Endothelial cell of umbilical vein (primary cell): ENCODE measurements at regions of chr5 and their contacts with region 1.

Region 1: GRCh38 chr5:124649491-124650146 is 96.8 kb downstream of the ZNF608 start:
- DNase-seq: peak; percentile 98
- H3K4me3 ChIP-seq: peak overlapping the region in 2 of 3 experiments; percentile 17 to 49
- H3K27ac ChIP-seq: peak overlapping the region; percentile 92
- H3K4me1 ChIP-seq: peaks cover 46% of the 10 kb centered on the region
- H3K27me3 ChIP-seq: no peaks in the 10 kb centered on the region
- CTCF ChIP-seq: no peak
- POLR2A ChIP-seq: peak; percentile 60

Region 2: DNA sequence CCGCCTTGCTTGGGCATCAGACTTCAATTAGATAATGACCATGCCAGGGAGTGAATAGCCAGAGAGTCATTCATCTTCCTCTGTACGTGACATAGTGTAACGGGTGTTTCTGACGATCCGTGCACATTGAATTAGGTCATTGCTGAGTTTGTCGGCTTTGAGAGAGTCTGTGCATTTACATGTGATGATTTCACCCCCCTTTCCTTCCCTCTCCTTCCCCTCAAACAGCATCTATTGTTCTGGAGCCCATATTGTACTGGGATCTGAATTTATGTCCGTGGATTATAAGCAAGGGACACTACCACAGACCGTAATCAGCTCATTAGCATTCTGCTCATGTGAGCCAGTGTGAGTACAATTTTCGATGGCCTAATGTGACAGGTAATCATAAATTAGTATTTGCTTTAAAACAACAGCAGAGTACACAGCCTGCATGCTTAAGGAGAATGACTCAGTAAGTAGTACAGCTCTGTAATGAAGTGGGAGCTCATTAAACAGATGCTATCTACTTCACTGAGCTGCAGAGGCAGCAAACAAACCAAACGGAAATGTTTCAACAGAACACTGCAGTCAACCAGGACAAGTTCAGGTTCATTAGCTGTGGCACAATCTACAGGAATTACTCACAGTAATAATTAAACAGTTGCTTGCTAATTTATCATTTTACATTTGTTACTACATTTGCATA is 835.5 kb before region 1 on chr5:
- CTCF ChIA-PET with region 1: no interaction called
- POLR2A ChIA-PET with region 1: no interaction called
- dilution Hi-C with region 1: no loop called
- intact Hi-C with region 1: loop called (anchors 5 kb)
- DNase-seq: peak; percentile 93
- H3K4me3 ChIP-seq: peak overlapping the region in 1 of 3 experiments; percentile 6
- H3K27ac ChIP-seq: peak overlapping the region; percentile 51
- H3K4me1 ChIP-seq: peaks cover 13% of the 10 kb centered on the region
- H3K27me3 ChIP-seq: no peaks in the 10 kb centered on the region
- CTCF ChIP-seq: no peak
- POLR2A ChIP-seq: no peak

Region 3: GRCh38 chr5:124315741-124316415 is 333.7 kb before region 1 on chr5:
- CTCF ChIA-PET with region 1: no interaction called
- POLR2A ChIA-PET with region 1: no interaction called
- dilution Hi-C with region 1: no loop called
- intact Hi-C with region 1: no loop called
- DNase-seq: no peak
- H3K4me3 ChIP-seq: no peak overlapping the region
- H3K27ac ChIP-seq: no peak overlapping the region
- H3K4me1 ChIP-seq: no peaks in the 10 kb centered on the region
- H3K27me3 ChIP-seq: no peaks in the 10 kb centered on the region
- CTCF ChIP-seq: no peak
- POLR2A ChIP-seq: no peak

Region 4: DNA sequence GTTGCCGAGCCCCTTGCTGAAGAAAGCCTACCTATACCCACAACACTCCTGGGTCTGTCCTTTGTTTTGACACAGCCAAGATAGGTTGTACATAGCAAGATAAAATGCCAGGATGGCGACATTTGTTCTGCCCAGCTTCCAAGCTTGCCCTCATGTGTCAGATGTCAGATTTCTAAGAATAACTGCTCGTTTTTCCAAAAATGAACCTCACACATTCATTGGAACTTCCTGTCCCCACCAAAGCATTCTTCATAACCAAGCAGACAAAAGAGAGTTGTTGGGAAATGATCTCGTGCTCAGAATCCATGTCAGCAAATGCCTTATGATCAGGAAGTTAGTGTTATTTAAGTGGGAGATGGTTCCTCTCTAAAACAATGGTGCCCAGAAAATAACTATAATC is 113.3 kb before region 1 on chr5:
- CTCF ChIA-PET with region 1: no interaction called
- POLR2A ChIA-PET with region 1: no interaction called
- dilution Hi-C with region 1: no loop called
- intact Hi-C with region 1: loop called (anchors 1 kb)
- DNase-seq: peak; percentile 91
- H3K4me3 ChIP-seq: no peak overlapping the region
- H3K27ac ChIP-seq: peak overlapping the region; percentile 63
- H3K4me1 ChIP-seq: peaks cover 28% of the 10 kb centered on the region
- H3K27me3 ChIP-seq: no peaks in the 10 kb centered on the region
- CTCF ChIP-seq: no peak
- POLR2A ChIP-seq: no peak

Region 5: DNA sequence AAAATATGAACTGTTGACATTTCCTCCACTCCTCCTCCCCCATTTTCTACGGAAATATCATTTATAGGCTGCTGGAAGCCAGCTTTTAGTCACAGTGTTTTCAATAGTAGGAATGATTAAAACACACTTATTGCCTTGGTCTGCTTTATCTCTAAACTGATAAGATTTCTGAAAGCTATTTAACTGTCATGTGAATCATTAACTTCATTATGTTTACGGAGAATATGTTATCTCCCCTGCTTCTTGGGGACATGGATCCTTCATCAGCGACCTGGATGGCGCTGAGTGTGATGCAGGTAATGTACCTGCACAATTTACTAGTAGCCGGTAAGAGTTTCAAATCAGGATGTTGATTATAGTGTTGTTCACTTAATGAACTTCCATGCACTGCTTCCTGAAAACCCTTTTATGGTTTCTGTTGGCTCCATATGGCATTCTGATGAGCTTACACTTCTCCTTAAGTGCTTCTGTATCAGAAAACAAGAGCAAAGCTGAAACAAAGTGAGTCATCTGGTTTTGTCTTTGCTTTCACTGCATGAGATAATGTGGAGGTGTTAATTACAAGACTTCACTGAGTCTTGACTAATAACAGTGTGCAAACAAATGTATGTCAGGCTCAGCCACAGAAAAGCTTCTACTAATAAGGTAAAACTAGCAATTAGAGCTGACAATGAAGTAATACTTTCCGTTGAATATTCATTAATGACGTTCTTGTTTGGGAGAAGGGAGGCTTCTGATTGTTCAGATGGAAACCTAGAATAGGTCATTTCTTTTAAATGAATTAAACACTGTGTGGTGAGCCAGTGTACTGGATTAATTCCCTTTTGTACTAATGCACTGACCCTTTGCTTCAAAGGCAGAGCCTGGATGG is 259.2 kb after region 1 on chr5:
- CTCF ChIA-PET with region 1: no interaction called
- POLR2A ChIA-PET with region 1: no interaction called
- dilution Hi-C with region 1: no loop called
- intact Hi-C with region 1: loop called (anchors 2 kb)
- DNase-seq: peak; percentile 77
- H3K4me3 ChIP-seq: no peak overlapping the region
- H3K27ac ChIP-seq: no peak overlapping the region
- H3K4me1 ChIP-seq: peaks cover 23% of the 10 kb centered on the region
- H3K27me3 ChIP-seq: no peaks in the 10 kb centered on the region
- CTCF ChIP-seq: no peak
- POLR2A ChIP-seq: no peak

Region 6: GRCh38 chr5:125190232-125191087 is 540.8 kb after region 1 on chr5:
- CTCF ChIA-PET with region 1: no interaction called
- POLR2A ChIA-PET with region 1: no interaction called
- dilution Hi-C with region 1: no loop called
- intact Hi-C with region 1: no loop called
- DNase-seq: no peak
- H3K4me3 ChIP-seq: no peak overlapping the region
- H3K27ac ChIP-seq: no peak overlapping the region
- H3K4me1 ChIP-seq: no peaks in the 10 kb centered on the region
- H3K27me3 ChIP-seq: no peaks in the 10 kb centered on the region
- CTCF ChIP-seq: no peak
- POLR2A ChIP-seq: no peak

Region 7: GRCh38 chr5:125262782-125263181 is 613.2 kb after region 1 on chr5:
- CTCF ChIA-PET with region 1: no interaction called
- POLR2A ChIA-PET with region 1: no interaction called
- dilution Hi-C with region 1: no loop called
- intact Hi-C with region 1: loop called (anchors 1 kb)
- DNase-seq: peak; percentile 83
- H3K4me3 ChIP-seq: no peak overlapping the region
- H3K27ac ChIP-seq: peak overlapping the region; percentile 81
- H3K4me1 ChIP-seq: peaks cover 22% of the 10 kb centered on the region
- H3K27me3 ChIP-seq: no peaks in the 10 kb centered on the region
- CTCF ChIP-seq: no peak
- POLR2A ChIP-seq: no peak

Region 8: DNA sequence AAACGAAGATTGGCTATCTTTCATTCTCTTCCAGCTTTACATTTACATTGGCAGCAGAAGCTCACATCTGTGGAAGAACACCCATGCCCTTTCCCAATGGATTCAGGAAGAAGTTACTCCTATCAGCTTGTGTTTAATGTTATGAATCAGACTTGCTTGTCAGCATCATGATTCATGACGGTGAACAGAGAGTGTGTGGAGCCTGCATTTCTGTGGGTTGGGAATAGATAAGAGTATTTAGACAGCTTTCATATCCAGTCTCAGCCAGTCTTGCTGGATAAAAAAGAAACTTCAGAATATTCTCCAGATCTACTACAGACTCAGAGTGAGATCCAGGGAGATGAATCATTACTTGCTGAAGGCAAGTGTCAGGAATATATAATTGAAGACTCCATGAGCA is 909.7 kb after region 1 on chr5:
- CTCF ChIA-PET with region 1: no interaction called
- POLR2A ChIA-PET with region 1: no interaction called
- dilution Hi-C with region 1: no loop called
- intact Hi-C with region 1: loop called (anchors 2 kb)
- DNase-seq: peak; percentile 99
- H3K4me3 ChIP-seq: peak overlapping the region in 1 of 3 experiments; percentile 13
- H3K27ac ChIP-seq: peak overlapping the region; percentile 51
- H3K4me1 ChIP-seq: peaks cover 17% of the 10 kb centered on the region
- H3K27me3 ChIP-seq: no peaks in the 10 kb centered on the region
- CTCF ChIP-seq: no peak
- POLR2A ChIP-seq: peak; percentile 74